ENCODE measurements at regions of chr14 and their contacts with region 1.

Region 1: GRCh38 chr14:53055003-53055402 is 98.1 kb downstream of the DDHD1 start:
- DNase-seq: peak; percentile 30
- CTCF ChIP-seq: peak; percentile 61

Region 2: GRCh38 chr14:52835122-52835903 is 219.7 kb before region 1 on chr14:
- CTCF ChIA-PET with region 1: no interaction called
- POLR2A ChIA-PET with region 1: no interaction called
- DNase-seq: no peak
- CTCF ChIP-seq: no peak

Region 3: GRCh38 chr14:53044486-53044885 is 10.5 kb before region 1 on chr14:
- CTCF ChIA-PET with region 1: interaction called, 49 read pairs
- POLR2A ChIA-PET with region 1: no interaction called
- DNase-seq: no peak
- CTCF ChIP-seq: no peak